PC-3 (cell line): ENCODE measurements at regions of chr5 and their contacts with region 1.

Region 1: GRCh38 chr5:96855031-96855872 is 21.0 kb upstream of the ERAP2 start:
- DNase-seq: peak; percentile 94
- ATAC-seq: peak; percentile 70
- H3K4me3 ChIP-seq: peak overlapping the region; percentile 58
- H3K27ac ChIP-seq: peak overlapping the region; percentile 92
- H3K4me1 ChIP-seq: peaks cover 62% of the 10 kb centered on the region
- H3K27me3 ChIP-seq: no peaks in the 10 kb centered on the region
- CTCF ChIP-seq: no peak

Region 2: DNA sequence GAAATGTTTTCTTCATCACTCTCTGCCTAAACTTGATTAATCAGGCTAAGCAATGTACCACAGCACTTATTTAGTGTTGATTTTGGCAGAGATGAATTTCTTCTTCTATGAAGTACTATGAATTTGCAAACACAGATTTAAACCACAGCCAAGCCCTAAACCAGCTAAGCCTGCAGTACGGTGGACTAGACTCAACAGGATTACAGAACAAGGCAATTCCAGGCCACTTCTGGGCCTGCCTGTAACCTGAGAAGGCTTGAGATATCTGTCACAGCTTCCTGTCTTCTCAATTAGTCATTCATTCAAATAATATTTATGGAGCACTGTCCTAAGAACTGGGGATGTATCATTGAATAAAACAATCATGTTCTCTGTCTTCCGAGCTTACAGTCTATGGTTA is 225.5 kb before region 1 on chr5:
- CTCF ChIA-PET with region 1: no interaction called
- POLR2A ChIA-PET with region 1: no interaction called
- intact Hi-C with region 1: loop called (anchors 10 kb)
- DNase-seq: peak; percentile 90
- ATAC-seq: peak; percentile 94
- H3K4me3 ChIP-seq: peak overlapping the region; percentile 26; the same call in 1 of the 2 replicates
- H3K27ac ChIP-seq: peak overlapping the region; percentile 96
- H3K4me1 ChIP-seq: peaks cover 44% of the 10 kb centered on the region
- H3K27me3 ChIP-seq: no peaks in the 10 kb centered on the region
- CTCF ChIP-seq: no peak

Region 3: DNA sequence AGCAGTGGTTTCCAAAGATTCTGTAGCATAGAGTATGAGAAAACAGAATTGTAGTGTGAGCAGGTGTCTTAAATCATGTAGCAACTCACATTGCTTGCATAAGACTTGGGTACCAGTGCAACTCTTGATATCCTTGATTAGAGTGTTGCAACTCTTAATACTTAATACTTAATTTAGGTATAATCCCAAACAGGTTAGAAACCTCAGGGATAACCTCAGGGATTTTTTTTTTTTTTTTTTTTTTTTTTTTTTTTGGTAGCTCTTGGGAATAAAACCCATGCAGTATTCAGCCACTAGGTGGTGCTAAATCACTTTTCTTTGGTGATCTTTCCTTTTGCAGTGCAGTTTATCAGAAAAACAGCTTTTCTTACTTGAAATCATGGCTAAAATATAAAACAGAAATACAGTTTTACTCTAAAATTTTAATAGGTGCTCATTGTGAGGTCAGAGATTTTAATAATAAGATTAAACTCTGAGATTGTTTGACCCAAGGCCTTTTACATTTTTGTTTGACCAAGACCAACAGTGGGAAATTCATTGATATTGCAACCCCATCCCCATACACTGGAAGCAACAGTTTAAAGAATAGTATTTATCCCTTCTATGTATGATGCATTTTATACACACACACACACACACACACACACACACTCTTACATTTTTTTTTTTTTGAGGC is 102.8 kb before region 1 on chr5:
- CTCF ChIA-PET with region 1: no interaction called
- POLR2A ChIA-PET with region 1: no interaction called
- intact Hi-C with region 1: no loop called
- DNase-seq: peak; percentile 87
- ATAC-seq: no peak
- H3K4me3 ChIP-seq: no peak overlapping the region
- H3K27ac ChIP-seq: no peak overlapping the region
- H3K4me1 ChIP-seq: no peaks in the 10 kb centered on the region
- H3K27me3 ChIP-seq: no peaks in the 10 kb centered on the region
- CTCF ChIP-seq: peak; percentile 91

Region 4: DNA sequence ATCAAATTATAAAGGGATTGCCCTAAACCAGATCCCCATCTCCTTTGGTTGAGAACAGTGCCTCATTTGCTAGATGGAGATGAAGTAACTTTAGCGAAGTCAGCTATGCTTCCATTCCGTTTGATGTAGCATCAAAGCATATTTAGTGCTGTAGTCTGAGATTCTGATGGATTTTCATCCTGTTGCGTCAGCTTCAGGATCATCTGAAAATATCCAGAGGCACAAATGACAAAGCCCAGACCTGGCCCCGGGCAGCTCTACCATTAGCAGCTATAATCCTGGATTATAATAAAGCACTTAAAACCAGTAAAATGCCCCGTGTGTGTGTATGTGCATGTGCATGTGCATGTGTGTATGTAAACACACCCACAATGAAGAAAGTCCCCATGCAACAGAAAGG is 92.2 kb before region 1 on chr5:
- CTCF ChIA-PET with region 1: no interaction called
- POLR2A ChIA-PET with region 1: no interaction called
- intact Hi-C with region 1: loop called (anchors 5 kb)
- DNase-seq: no peak
- ATAC-seq: no peak
- H3K4me3 ChIP-seq: no peak overlapping the region
- H3K27ac ChIP-seq: no peak overlapping the region
- H3K4me1 ChIP-seq: peaks cover 25% of the 10 kb centered on the region
- H3K27me3 ChIP-seq: no peaks in the 10 kb centered on the region
- CTCF ChIP-seq: no peak

Region 5: GRCh38 chr5:96823900-96824351 is 31.3 kb before region 1 on chr5:
- CTCF ChIA-PET with region 1: no interaction called
- POLR2A ChIA-PET with region 1: interaction called, 4 read pairs
- intact Hi-C with region 1: loop called (anchors 1 kb)
- DNase-seq: peak; percentile 96
- ATAC-seq: peak; percentile 100
- H3K4me3 ChIP-seq: no peak overlapping the region
- H3K27ac ChIP-seq: peak overlapping the region; percentile 71
- H3K4me1 ChIP-seq: peaks cover 29% of the 10 kb centered on the region
- H3K27me3 ChIP-seq: no peaks in the 10 kb centered on the region
- CTCF ChIP-seq: no peak

Region 6: GRCh38 chr5:96893342-96893741 is 38.1 kb after region 1 on chr5:
- CTCF ChIA-PET with region 1: no interaction called
- POLR2A ChIA-PET with region 1: no interaction called
- intact Hi-C with region 1: no loop called
- DNase-seq: peak; percentile 35
- ATAC-seq: no peak
- H3K4me3 ChIP-seq: no peak overlapping the region
- H3K27ac ChIP-seq: no peak overlapping the region
- H3K4me1 ChIP-seq: no peaks in the 10 kb centered on the region
- H3K27me3 ChIP-seq: no peaks in the 10 kb centered on the region
- CTCF ChIP-seq: no peak